ENCODE measurements at regions of chr16 and their contacts with region 1.

Region 1: DNA sequence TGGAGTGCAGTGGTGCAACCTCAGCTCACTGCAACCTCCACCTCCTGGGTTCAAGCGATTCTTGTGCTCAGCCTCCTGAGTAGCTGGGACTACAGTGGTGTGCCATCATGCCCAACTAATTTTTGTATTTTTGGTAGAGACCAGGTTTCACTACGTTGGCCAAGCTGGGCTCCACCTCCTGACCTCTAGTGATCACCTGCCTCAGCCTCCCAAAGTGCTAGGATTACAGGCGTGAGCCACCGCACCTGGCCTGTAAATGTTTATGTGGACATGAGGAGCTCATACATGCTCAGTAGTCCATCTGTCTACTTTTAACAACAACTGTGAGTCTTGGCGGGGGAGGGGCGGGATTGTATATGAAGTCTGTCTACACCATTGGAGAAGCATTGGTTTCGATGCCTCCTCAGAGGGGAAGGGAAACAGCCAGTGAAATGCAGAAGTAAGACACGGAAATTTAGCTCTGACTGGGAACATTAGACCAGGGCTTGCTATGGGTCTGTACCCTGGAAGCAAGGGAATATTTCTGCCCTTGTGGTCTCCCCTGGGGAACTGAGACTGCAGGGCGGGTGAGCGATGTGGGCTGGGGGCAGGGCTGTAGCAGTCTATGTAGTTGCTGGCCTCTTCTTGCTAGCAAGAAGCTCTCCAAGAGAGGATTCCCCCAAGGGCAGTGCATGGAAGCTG is 9.3 kb downstream of the NUBP1 start:
- DNase-seq: peak in 2 of 3 donors; percentile 49
- H3K4me3 ChIP-seq: no peak overlapping the region
- H3K27ac ChIP-seq: no peak overlapping the region
- H3K4me1 ChIP-seq: peaks cover 0 to 22% (median 0%) of the 10 kb centered on the region in 4 experiments
- H3K27me3 ChIP-seq: no peaks in the 10 kb centered on the region

Region 2: GRCh38 chr16:10918294-10919002 is 165.5 kb after region 1 on chr16:
- CTCF ChIA-PET with region 1: interaction called, 10 read pairs
- POLR2A ChIA-PET with region 1: interaction called, 8 read pairs
- DNase-seq: peak; percentile 91 to 95 (median 91)
- H3K4me3 ChIP-seq: no peak overlapping the region
- H3K27ac ChIP-seq: no peak overlapping the region
- H3K4me1 ChIP-seq: peaks cover 0 to 6% (median 0%) of the 10 kb centered on the region in 4 experiments
- H3K27me3 ChIP-seq: no peaks in the 10 kb centered on the region

Measured in common myeloid progenitor, CD34-positive (primary cell).